CD4-positive, alpha-beta memory T cell (primary cell): ENCODE measurements at regions of chr4 and their contacts with region 1.

Region 1: DNA sequence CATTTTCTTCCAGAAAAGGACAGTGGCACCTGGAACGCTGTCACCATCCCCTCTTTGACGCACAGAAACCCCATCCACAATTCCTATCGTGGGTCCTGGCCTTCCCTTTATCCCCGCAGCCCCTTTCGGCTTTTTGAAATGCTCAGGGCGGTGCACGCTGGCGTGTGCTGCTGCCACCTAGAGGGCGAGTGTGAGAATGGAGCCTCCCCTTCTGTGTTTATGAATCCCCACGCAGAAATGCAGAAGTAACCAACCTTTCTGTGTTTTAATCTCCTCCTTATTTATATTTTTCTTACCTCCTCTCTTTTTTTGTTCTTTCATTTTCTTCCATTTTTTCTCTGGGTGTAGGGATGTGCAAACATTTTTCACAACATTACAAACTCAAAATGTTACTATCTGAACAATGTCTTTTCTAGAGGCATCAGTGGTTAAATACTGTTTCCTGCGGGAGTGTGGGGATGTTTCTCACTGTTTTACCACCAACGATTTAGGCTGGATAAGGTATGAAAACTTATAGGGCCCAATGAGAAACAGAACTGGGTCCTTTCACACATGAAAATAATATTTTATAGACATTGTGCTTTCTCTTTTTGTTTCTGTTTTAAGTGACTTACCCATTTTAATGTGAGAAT is 50.0 kb downstream of the TMA16 start:
- DNase-seq: peak; percentile 41 to 49 (median 45)
- H3K4me3 ChIP-seq: peak overlapping the region in 1 of 2 donors; percentile 43
- H3K4me3 Mint-ChIP-seq: no peak overlapping the region
- H3K27ac ChIP-seq: no peak overlapping the region
- H3K27ac Mint-ChIP-seq: no peak overlapping the region
- H3K4me1 ChIP-seq: no peaks in the 10 kb centered on the region
- H3K4me1 Mint-ChIP-seq: peaks cover 1 to 13% (median 7%) of the 10 kb centered on the region in 4 donors
- H3K27me3 ChIP-seq: no peaks in the 10 kb centered on the region
- H3K27me3 Mint-ChIP-seq: no peaks in the 10 kb centered on the region

Region 2: DNA sequence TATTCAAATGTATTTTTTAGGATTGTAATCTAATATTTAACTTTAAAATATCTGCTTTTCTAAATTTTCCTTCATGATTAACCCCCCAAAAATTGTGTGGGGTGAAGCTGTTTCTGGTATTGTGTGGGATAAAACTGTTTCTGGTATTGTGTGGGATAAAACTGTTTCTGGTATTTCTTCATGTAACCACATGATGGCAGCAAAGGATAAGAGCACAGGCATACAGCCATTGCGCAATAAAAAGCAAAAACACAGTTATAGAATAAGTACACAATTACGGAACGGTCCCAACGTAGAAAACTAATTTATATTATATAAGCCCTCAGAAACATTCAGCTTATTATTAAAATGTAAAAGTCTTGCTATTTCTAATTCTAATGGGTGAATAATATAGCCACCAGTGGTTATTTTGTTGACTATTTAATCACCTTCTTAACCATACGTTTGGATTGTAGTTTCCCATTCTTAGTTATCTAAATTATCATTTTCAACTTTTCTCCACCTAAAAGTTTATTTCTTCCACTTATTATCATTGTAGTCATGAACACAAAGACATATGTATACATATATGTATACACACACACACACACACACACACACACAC is 1046.9 kb before region 1 on chr4:
- CTCF ChIA-PET with region 1: interaction called, 7 read pairs
- POLR2A ChIA-PET with region 1: no interaction called
- intact Hi-C with region 1: loop called (anchors 1 kb)
- DNase-seq: peak in 4 of 5 donors; percentile 28 to 40 (median 31)
- H3K4me3 ChIP-seq: no peak overlapping the region
- H3K4me3 Mint-ChIP-seq: no peak overlapping the region
- H3K27ac ChIP-seq: no peak overlapping the region
- H3K27ac Mint-ChIP-seq: no peak overlapping the region
- H3K4me1 ChIP-seq: no peaks in the 10 kb centered on the region
- H3K4me1 Mint-ChIP-seq: no peaks in the 10 kb centered on the region
- H3K27me3 ChIP-seq: no peaks in the 10 kb centered on the region
- H3K27me3 Mint-ChIP-seq: peaks cover 0 to 1% of the 10 kb centered on the region in 2 donors

Region 3: GRCh38 chr4:163484906-163485305 is 59.6 kb before region 1 on chr4:
- CTCF ChIA-PET with region 1: interaction called, 53 read pairs
- POLR2A ChIA-PET with region 1: no interaction called
- intact Hi-C with region 1: loop called (anchors 1 kb)
- DNase-seq: peak in 4 of 5 donors; percentile 29 to 36 (median 34)
- H3K4me3 ChIP-seq: no peak overlapping the region
- H3K4me3 Mint-ChIP-seq: no peak overlapping the region
- H3K27ac ChIP-seq: no peak overlapping the region
- H3K27ac Mint-ChIP-seq: no peak overlapping the region
- H3K4me1 ChIP-seq: no peaks in the 10 kb centered on the region
- H3K4me1 Mint-ChIP-seq: peaks cover 0 to 3% (median 0%) of the 10 kb centered on the region in 4 donors
- H3K27me3 ChIP-seq: no peaks in the 10 kb centered on the region
- H3K27me3 Mint-ChIP-seq: peaks cover 0 to 1% of the 10 kb centered on the region in 2 donors

Region 4: GRCh38 chr4:163663454-163664225 is 119.1 kb after region 1 on chr4:
- CTCF ChIA-PET with region 1: interaction called, 144 read pairs
- POLR2A ChIA-PET with region 1: no interaction called
- intact Hi-C with region 1: no loop called
- DNase-seq: no peak
- H3K4me3 ChIP-seq: no peak overlapping the region
- H3K4me3 Mint-ChIP-seq: peak overlapping the region in 4 of 8 donors; percentile 10 to 45 (median 21)
- H3K27ac ChIP-seq: no peak overlapping the region
- H3K27ac Mint-ChIP-seq: peak overlapping the region in 4 of 7 donors; percentile 20 to 79 (median 44)
- H3K4me1 ChIP-seq: peaks cover 48% of the 10 kb centered on the region
- H3K4me1 Mint-ChIP-seq: peaks cover 38 to 53% (median 48%) of the 10 kb centered on the region in 4 donors
- H3K27me3 ChIP-seq: no peaks in the 10 kb centered on the region
- H3K27me3 Mint-ChIP-seq: no peaks in the 10 kb centered on the region

Region 5: GRCh38 chr4:163755013-163755412 is 210.5 kb after region 1 on chr4:
- CTCF ChIA-PET with region 1: interaction called, 132 read pairs
- POLR2A ChIA-PET with region 1: no interaction called
- intact Hi-C with region 1: no loop called
- DNase-seq: peak in 4 of 5 donors; percentile 32 to 43 (median 38)
- H3K4me3 ChIP-seq: no peak overlapping the region
- H3K4me3 Mint-ChIP-seq: peak overlapping the region in 2 of 8 donors; percentile 29 to 39
- H3K27ac ChIP-seq: no peak overlapping the region
- H3K27ac Mint-ChIP-seq: no peak overlapping the region
- H3K4me1 ChIP-seq: no peaks in the 10 kb centered on the region
- H3K4me1 Mint-ChIP-seq: peaks cover 0 to 8% (median 3%) of the 10 kb centered on the region in 4 donors
- H3K27me3 ChIP-seq: no peaks in the 10 kb centered on the region
- H3K27me3 Mint-ChIP-seq: peaks cover 0 to 2% of the 10 kb centered on the region in 2 donors

Region 6: GRCh38 chr4:164731827-164732474 is 1187.4 kb after region 1 on chr4:
- CTCF ChIA-PET with region 1: interaction called, 178 read pairs
- POLR2A ChIA-PET with region 1: no interaction called
- intact Hi-C with region 1: no loop called
- DNase-seq: peak in 4 of 5 donors; percentile 21 to 46 (median 34)
- H3K4me3 ChIP-seq: no peak overlapping the region
- H3K4me3 Mint-ChIP-seq: no peak overlapping the region
- H3K27ac ChIP-seq: no peak overlapping the region
- H3K27ac Mint-ChIP-seq: no peak overlapping the region
- H3K4me1 ChIP-seq: no peaks in the 10 kb centered on the region
- H3K4me1 Mint-ChIP-seq: peaks cover 0 to 2% (median 0%) of the 10 kb centered on the region in 4 donors
- H3K27me3 ChIP-seq: no peaks in the 10 kb centered on the region
- H3K27me3 Mint-ChIP-seq: peaks cover 2 to 3% of the 10 kb centered on the region in 2 donors